CD14-positive monocyte (primary cell): ENCODE measurements at regions of chr12 and their contacts with region 1.

Region 1: GRCh38 chr12:104569346-104570173 is 112.8 kb downstream of the CHST11 start:
- DNase-seq: peak; percentile 76 to 91 (median 90)
- H3K4me3 ChIP-seq: peak overlapping the region in 2 of 3 experiments; percentile 27 to 56
- H3K4me3 Mint-ChIP-seq: peak overlapping the region; percentile 53 to 87
- H3K27ac ChIP-seq: peak overlapping the region; percentile 66 to 90
- H3K27ac Mint-ChIP-seq: peak overlapping the region; percentile 91 to 98 (median 93)
- H3K4me1 ChIP-seq: peaks cover 49 to 59% of the 10 kb centered on the region in 2 donors
- H3K4me1 Mint-ChIP-seq: peaks cover 72% of the 10 kb centered on the region
- H3K27me3 ChIP-seq: no peaks in the 10 kb centered on the region
- H3K27me3 Mint-ChIP-seq: peaks cover 0 to 2% (median 0%) of the 10 kb centered on the region in 3 donors
- CTCF ChIP-seq: no peak

Region 2: GRCh38 chr12:104446646-104447421 is 122.7 kb before region 1 on chr12:
- intact Hi-C with region 1: loop called in 1 of 2 experiments (anchors 10 kb)
- DNase-seq: peak in 1 of 3 donors; percentile 38
- H3K4me3 ChIP-seq: no peak overlapping the region
- H3K4me3 Mint-ChIP-seq: no peak overlapping the region
- H3K27ac ChIP-seq: no peak overlapping the region
- H3K27ac Mint-ChIP-seq: peak overlapping the region in 1 of 7 donors; percentile 19
- H3K4me1 ChIP-seq: no peaks in the 10 kb centered on the region
- H3K4me1 Mint-ChIP-seq: peaks cover 6% of the 10 kb centered on the region
- H3K27me3 ChIP-seq: no peaks in the 10 kb centered on the region
- H3K27me3 Mint-ChIP-seq: peaks cover 1 to 6% (median 4%) of the 10 kb centered on the region in 3 donors
- CTCF ChIP-seq: no peak

Region 3: DNA sequence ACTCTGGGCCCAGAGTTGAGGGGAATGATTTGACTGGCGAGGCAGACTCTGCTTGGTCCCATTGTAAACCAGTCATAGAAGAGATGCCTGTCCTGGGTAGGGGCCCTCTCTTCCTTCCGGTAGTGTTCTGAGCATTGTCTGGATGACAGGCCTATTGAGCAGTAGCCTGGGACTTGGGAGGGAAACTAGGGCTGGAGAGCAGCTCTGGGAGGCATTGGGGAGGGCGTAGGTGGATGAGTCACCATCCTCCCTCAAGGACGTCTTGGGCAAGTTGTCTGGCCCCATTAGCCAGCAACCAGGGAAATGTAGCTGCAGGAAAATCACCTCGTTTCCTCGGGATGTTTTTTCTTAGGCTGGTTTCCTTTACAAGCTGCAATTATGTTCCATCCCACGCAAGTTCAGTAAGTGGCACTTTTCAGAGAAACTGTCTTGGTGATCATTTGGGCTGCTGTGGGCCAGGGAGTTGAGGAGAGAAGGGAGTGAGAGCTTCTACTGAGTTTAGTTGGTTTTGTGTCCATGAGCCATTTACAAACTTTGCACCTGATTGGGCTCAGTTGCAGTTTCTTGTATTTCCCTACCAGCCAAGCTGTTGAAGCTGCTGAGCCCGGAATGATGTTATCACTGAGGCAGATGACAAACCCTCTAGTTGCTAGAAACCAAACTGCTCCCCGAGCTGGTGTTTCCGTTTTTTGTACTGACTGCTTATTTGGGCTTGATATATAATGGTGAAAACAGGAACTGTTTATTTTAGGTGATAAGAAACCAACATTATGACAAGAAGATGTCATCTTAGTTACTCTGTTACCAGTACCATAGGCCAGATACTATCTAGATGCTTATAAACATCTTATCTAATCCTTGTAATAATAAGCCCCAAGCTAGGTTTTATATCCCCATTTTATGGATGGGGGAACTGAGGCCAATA is 34.8 kb after region 1 on chr12:
- intact Hi-C with region 1: loop called in 1 of 2 experiments (anchors 5 kb)
- DNase-seq: peak; percentile 94 to 97 (median 95)
- H3K4me3 ChIP-seq: peak overlapping the region in 1 of 3 experiments; percentile 39
- H3K4me3 Mint-ChIP-seq: peak overlapping the region; percentile 65 to 71
- H3K27ac ChIP-seq: peak overlapping the region; percentile 71 to 92
- H3K27ac Mint-ChIP-seq: peak overlapping the region; percentile 95 to 99 (median 98)
- H3K4me1 ChIP-seq: peaks cover 61 to 74% of the 10 kb centered on the region in 2 donors
- H3K4me1 Mint-ChIP-seq: peaks cover 86% of the 10 kb centered on the region
- H3K27me3 ChIP-seq: no peaks in the 10 kb centered on the region
- H3K27me3 Mint-ChIP-seq: peaks cover 0 to 4% (median 0%) of the 10 kb centered on the region in 3 donors
- CTCF ChIP-seq: no peak